ENCODE measurements at regions of chr10 and their contacts with region 1.

Region 1: DNA sequence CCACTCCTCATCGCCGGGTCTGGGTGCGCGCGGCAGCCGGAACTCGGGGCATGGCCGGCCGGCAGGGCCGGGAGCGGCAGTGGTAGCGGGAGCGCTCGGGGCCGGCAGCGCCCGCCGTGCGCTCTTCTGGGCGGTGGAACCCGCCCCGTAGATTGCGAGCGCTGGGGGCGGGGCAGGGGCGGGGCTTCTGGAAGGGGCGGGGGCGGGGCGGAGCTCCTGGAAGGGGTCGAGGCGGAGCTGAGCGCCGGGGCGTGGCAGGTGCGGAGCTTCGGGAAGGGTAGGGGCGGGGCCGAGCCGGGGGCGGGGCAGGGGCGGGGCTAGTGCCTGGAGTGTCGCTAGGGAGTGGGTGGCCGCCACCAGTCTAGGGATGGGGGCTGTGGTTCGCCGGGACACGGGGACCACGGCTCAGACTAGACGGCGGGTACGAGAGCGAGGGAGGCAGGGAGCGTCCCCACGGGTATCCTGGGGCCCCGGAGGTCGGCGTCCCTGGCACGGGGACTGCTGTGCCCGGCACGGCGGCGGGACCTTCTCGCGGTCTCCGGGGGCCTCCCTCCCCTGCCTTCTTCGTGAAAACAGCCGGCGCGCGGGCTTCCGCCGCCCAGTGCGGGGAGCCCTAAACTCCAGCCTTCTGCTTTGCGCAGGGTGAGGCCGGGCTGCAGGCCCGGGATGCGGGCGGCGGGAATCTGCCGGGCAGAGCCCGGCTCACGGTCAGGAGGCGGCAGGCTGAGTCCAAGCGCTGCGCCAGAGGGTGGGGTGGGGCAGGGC is at the start of gene STK32C:
- DNase-seq: peak; percentile 92
- ATAC-seq: peak; percentile 87
- H3K4me3 ChIP-seq: peak within 1 kb of the TSS; percentile 21 to 74 (median 66)
- H3K4me3 Mint-ChIP-seq: peak within 1 kb of the TSS; percentile 89
- H3K27ac ChIP-seq: no peak within 1 kb of the TSS
- H3K27ac Mint-ChIP-seq: peak within 1 kb of the TSS; percentile 46
- H3K4me1 ChIP-seq: peaks cover 11% of the 10 kb centered on the region in 2 donors
- H3K4me1 Mint-ChIP-seq: peaks cover 11% of the 10 kb centered on the region
- H3K27me3 ChIP-seq: peaks cover 0 to 26% (median 9%) of the 10 kb centered on the region in 4 experiments
- H3K27me3 Mint-ChIP-seq: peaks cover 14% of the 10 kb centered on the region
- CTCF ChIP-seq: no peak
- total RNA-seq, gene STK32C: 16.8 and 20.0 TPM in 2 replicates

Region 2: DNA sequence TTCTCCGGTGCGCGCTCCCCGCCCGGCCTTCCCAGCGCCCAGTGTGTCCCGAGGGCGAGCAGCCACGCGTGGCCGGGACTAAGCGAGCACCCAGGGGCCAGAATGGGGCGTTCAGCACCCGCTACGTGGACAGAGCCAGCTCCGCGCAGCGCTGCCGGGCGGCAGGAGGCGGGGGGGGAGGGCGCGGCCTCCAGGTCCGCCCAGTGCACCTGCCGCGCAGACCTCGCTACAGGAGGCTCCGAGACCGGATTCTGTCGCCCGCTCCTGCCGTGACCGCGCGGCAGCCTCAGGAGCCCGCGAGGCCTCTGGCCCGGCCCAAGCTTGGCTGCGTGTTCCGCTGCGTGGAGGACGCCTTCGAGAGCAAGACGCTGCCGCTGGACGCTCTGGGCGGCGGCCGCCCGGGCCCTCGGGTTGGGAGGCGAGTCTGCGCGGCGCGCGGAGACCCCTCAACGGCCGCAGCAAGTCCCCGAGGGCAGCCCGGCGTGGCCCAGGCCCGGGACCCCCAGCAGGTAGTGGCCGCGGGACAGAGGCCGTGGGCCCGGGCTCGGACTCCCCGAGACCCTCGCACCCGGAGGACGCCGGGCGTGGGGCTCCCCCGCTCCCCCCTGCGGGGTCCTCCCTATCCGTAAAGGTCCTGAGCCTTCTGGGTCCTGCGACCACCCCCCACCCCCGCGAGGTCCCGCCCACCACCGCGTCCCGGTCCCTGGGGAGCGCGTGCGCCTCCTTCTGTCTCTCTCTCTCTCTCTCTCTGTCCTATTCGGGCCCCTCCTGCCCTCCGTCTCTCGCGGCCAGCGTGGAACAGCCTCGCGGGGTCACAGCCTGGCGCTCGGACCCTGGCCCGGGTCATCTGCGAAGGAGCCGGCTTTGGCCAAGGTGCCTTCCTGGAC is 122.2 kb before region 1 on chr10:
- CTCF ChIA-PET with region 1: no interaction called
- POLR2A ChIA-PET with region 1: no interaction called
- intact Hi-C with region 1: loop called (anchors 2 kb)
- DNase-seq: peak; percentile 65
- ATAC-seq: peak; percentile 70
- H3K4me3 ChIP-seq: peak overlapping the region in 2 of 5 experiments; percentile 2 to 37
- H3K4me3 Mint-ChIP-seq: peak overlapping the region; percentile 52
- H3K27ac ChIP-seq: no peak overlapping the region
- H3K27ac Mint-ChIP-seq: no peak overlapping the region
- H3K4me1 ChIP-seq: peaks cover 13 to 25% of the 10 kb centered on the region in 2 donors
- H3K4me1 Mint-ChIP-seq: peaks cover 8% of the 10 kb centered on the region
- H3K27me3 ChIP-seq: peaks cover 0 to 53% (median 19%) of the 10 kb centered on the region in 4 experiments
- H3K27me3 Mint-ChIP-seq: peaks cover 52% of the 10 kb centered on the region
- CTCF ChIP-seq: no peak

Region 3: GRCh38 chr10:132331526-132332432 is 23.8 kb after region 1 on chr10 and contains the start of gene LRRC27:
- CTCF ChIA-PET with region 1: no interaction called
- POLR2A ChIA-PET with region 1: interaction called, 4 read pairs
- intact Hi-C with region 1: loop called (anchors 1 kb)
- DNase-seq: peak; percentile 100
- ATAC-seq: peak; percentile 78
- H3K4me3 ChIP-seq: peak within 1 kb of the TSS; percentile 81 to 95 (median 90)
- H3K4me3 Mint-ChIP-seq: peak within 1 kb of the TSS; percentile 83
- H3K27ac ChIP-seq: peak within 1 kb of the TSS; percentile 93 to 96
- H3K27ac Mint-ChIP-seq: peak within 1 kb of the TSS; percentile 99
- H3K4me1 ChIP-seq: peaks cover 50 to 60% of the 10 kb centered on the region in 2 donors
- H3K4me1 Mint-ChIP-seq: peaks cover 75% of the 10 kb centered on the region
- H3K27me3 ChIP-seq: no peaks in the 10 kb centered on the region
- H3K27me3 Mint-ChIP-seq: no peaks in the 10 kb centered on the region
- CTCF ChIP-seq: no peak
- total RNA-seq, gene LRRC27: 23.6 and 32.2 TPM in 2 replicates

Region 4: DNA sequence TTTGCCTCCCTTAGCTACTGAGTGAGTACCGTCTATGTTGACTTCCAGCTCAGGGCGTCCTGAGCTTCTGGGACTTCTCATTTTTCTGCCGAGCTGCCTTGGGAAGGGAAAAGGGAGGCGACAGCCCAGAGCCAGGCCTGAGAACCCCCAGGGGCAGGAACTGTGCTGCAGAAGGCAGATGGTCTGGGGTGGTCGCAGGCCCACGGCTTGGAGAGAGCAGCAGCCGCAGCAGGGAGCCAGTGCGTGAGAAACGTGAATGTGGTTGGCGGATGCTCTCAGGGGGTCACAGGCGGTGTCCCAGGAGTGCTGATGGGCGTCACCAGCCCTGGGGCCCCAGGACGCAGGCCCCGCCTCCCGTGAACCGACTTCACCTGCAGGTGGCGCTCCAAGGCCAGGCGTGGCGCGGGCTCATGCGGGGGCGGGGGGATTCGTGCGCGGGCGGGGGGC is 79.8 kb after region 1 on chr10:
- CTCF ChIA-PET with region 1: no interaction called
- POLR2A ChIA-PET with region 1: no interaction called
- intact Hi-C with region 1: loop called (anchors 1 kb)
- DNase-seq: peak; percentile 89
- ATAC-seq: peak; percentile 95
- H3K4me3 ChIP-seq: peak overlapping the region in 4 of 5 experiments; percentile 16 to 47 (median 28)
- H3K4me3 Mint-ChIP-seq: peak overlapping the region; percentile 85
- H3K27ac ChIP-seq: peak overlapping the region; percentile 66 to 72
- H3K27ac Mint-ChIP-seq: peak overlapping the region; percentile 91
- H3K4me1 ChIP-seq: peaks cover 6 to 21% of the 10 kb centered on the region in 2 donors
- H3K4me1 Mint-ChIP-seq: peaks cover 9% of the 10 kb centered on the region
- H3K27me3 ChIP-seq: no peaks in the 10 kb centered on the region
- H3K27me3 Mint-ChIP-seq: no peaks in the 10 kb centered on the region
- CTCF ChIP-seq: peak; percentile 56

Measured in B cell (primary cell).